Mammary epithelial cell (primary cell): ENCODE measurements at regions of chr9 and their contacts with region 1.

Region 1: DNA sequence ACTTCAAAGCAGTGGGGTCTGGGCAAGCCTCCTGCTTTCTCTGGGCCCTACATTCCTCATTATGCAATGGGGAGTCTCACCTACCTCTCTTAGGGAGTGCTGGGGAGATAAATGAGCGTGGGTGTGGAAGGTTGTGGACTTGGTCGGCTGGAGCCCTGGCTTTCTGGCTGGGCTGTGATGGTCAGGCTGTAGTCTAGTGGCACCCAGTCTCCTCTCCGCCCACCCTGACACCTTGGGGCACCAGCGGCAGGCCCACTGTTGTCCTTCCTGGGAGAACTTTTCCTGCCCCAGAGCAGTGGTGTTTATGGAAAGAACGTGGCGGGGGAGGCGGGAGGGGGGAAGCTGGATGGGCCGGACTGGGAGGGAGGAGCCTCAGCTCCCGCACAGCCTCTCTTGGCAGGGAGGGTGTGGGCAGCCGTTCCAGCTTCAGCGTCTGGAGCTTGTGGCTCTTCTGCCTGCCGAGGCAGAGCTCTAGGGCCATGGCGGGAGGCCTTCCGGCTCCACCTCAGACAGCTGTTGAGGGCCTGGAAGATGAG is 4.1 kb downstream of the PTGS1 start:
- DNase-seq: no peak
- H3K4me3 ChIP-seq: no peak overlapping the region
- H3K27ac ChIP-seq: no peak overlapping the region
- H3K4me1 ChIP-seq: peaks cover 26% of the 10 kb centered on the region
- H3K27me3 ChIP-seq: no peaks in the 10 kb centered on the region
- CTCF ChIP-seq: no peak

Region 2: GRCh38 chr9:122302237-122303093 is 72.5 kb before region 1 on chr9:
- CTCF ChIA-PET with region 1: no interaction called
- dilution Hi-C with region 1: loop called (anchors 5 kb)
- in situ Hi-C with region 1: no loop called
- intact Hi-C with region 1: no loop called
- DNase-seq: no peak
- H3K4me3 ChIP-seq: no peak overlapping the region
- H3K27ac ChIP-seq: no peak overlapping the region
- H3K4me1 ChIP-seq: peaks cover 4% of the 10 kb centered on the region
- H3K27me3 ChIP-seq: no peaks in the 10 kb centered on the region
- CTCF ChIP-seq: no peak

Region 3: GRCh38 chr9:122875523-122875922 is 500.6 kb after region 1 on chr9:
- CTCF ChIA-PET with region 1: no interaction called
- dilution Hi-C with region 1: no loop called
- in situ Hi-C with region 1: no loop called
- intact Hi-C with region 1: no loop called
- DNase-seq: no peak
- H3K4me3 ChIP-seq: no peak overlapping the region
- H3K27ac ChIP-seq: no peak overlapping the region
- H3K4me1 ChIP-seq: no peaks in the 10 kb centered on the region
- H3K27me3 ChIP-seq: no peaks in the 10 kb centered on the region
- CTCF ChIP-seq: no peak